Activated naive CD4-positive, alpha-beta T cell treated with anti-CD3 and anti-CD28 coated beads for 36 hours (primary cell): ENCODE measurements at regions of chr18 and their contacts with region 1.

Region 1: DNA sequence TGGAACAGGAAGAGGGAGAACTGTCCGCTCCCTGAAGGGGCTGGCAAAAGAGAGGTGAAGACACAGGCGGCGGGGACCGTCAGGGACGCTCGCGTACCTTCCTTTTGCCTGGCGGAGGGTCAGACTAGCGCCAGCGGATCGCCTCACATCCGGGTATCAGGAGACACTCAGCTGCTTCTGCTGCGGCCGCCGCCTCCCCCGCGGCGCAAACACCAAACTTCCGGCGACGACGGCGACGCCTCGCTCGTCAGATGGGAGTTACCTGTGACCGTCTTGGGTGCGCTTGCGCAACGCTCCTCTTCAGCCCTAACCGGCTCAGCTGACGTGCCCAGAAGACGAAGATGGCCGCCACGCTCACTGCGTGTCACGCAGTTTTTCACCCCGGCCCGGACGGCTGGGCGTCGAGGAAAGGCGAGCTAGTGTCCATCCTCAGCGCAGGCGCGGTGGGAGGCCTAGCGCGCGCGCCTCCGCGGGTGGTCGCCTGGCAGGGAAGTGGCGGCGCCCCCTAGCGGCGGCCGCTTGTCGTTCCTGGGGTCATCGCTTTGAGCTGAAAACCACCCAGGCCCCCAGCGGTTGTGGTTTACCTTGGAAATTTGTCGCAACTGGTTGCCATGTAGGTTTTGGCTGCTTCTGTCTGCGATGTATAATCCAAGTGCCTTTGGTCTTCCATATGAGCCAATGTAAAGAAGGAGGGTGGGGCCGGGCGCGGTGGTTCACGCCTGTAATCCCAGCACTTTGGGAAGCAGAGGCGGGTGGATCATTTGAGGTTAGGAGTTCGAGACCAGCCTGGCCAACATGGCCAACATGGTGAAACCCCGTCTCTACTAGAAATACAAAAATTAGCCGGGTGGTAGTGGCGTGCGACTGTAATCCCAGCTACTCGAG is at the start of gene ESCO1:
- DNase-seq: peak; percentile 95
- H3K4me3 Mint-ChIP-seq: peak within 1 kb of the TSS; percentile 92
- H3K27ac Mint-ChIP-seq: peak within 1 kb of the TSS; percentile 96
- H3K4me1 Mint-ChIP-seq: peaks cover 26% of the 10 kb centered on the region
- H3K27me3 Mint-ChIP-seq: no peaks in the 10 kb centered on the region
- total RNA-seq, gene ESCO1: 14.3 to 16.7 TPM

Region 2: GRCh38 chr18:21099442-21099841 is 501.3 kb before region 1 on chr18:
- CTCF ChIA-PET with region 1: no interaction called
- intact Hi-C with region 1: no loop called
- DNase-seq: no peak
- H3K4me3 Mint-ChIP-seq: no peak overlapping the region
- H3K27ac Mint-ChIP-seq: no peak overlapping the region
- H3K4me1 Mint-ChIP-seq: peaks cover 70% of the 10 kb centered on the region
- H3K27me3 Mint-ChIP-seq: no peaks in the 10 kb centered on the region

Region 3: DNA sequence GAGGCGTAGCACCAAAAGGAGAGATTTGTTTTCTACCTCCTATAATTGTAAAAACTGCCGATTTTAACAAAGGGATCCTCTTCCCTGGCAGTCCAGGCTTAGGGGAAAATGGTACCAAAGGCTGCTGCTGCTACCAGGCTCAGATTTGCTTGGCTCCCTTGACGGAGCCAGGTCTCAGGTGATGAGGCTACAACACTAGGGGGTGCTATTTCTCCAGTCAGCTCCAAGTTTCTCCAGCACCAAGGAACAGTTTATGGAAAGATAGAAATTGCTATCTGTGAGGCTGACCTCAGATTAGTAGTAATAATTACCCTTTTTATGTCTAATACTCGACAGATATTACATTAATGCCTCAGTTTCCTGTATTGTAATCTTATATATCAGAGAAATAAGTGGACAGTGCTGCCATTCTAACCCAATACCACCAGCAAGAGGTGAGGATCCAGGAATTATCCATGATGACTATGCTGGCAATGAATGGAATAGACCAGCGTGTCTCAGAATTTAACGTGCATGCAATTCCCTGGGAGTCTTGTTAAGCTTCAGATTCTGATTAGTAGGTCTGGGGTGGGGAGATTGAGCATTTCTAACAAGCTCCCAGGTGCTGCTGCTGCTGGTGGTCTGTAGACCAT is 111.5 kb before region 1 on chr18:
- CTCF ChIA-PET with region 1: interaction called, 3 read pairs
- intact Hi-C with region 1: loop called (anchors 1 kb)
- DNase-seq: peak; percentile 52
- H3K4me3 Mint-ChIP-seq: no peak overlapping the region
- H3K27ac Mint-ChIP-seq: no peak overlapping the region
- H3K4me1 Mint-ChIP-seq: no peaks in the 10 kb centered on the region
- H3K27me3 Mint-ChIP-seq: peaks cover 6% of the 10 kb centered on the region

Region 4: GRCh38 chr18:21612125-21612991 is 11.6 kb after region 1 on chr18 and contains the start of gene SNRPD1:
- CTCF ChIA-PET with region 1: interaction called, 116 read pairs
- intact Hi-C with region 1: loop called (anchors 1 kb)
- DNase-seq: peak; percentile 89
- H3K4me3 Mint-ChIP-seq: peak within 1 kb of the TSS; percentile 96
- H3K27ac Mint-ChIP-seq: peak within 1 kb of the TSS; percentile 97
- H3K4me1 Mint-ChIP-seq: peaks cover 35% of the 10 kb centered on the region
- H3K27me3 Mint-ChIP-seq: no peaks in the 10 kb centered on the region
- total RNA-seq, gene SNRPD1: 133 to 144 TPM

Region 5: DNA sequence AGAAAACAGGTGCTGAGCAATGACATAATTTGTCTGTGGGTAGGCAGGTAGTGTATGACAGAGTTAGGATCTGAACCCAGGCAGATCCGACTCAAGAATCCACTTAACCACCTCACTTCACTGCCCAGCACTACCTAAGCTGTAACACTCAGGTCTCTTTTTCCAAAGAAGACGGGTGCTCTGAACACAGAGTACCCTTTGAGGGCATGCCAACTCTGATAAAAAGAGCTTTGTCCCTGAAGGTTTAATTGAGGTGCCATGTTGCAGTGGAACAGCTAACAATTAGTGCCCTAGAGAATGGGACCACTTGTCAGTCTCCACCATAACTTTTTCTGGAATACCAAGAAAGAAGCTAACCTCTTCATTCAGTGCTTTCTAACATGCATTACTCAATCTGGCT is 92.6 kb after region 1 on chr18:
- CTCF ChIA-PET with region 1: no interaction called
- intact Hi-C with region 1: no loop called
- DNase-seq: no peak
- H3K4me3 Mint-ChIP-seq: no peak overlapping the region
- H3K27ac Mint-ChIP-seq: no peak overlapping the region
- H3K4me1 Mint-ChIP-seq: peaks cover 7% of the 10 kb centered on the region
- H3K27me3 Mint-ChIP-seq: no peaks in the 10 kb centered on the region